ENCODE measurements at regions of chr17 and their contacts with region 1.

Region 1: DNA sequence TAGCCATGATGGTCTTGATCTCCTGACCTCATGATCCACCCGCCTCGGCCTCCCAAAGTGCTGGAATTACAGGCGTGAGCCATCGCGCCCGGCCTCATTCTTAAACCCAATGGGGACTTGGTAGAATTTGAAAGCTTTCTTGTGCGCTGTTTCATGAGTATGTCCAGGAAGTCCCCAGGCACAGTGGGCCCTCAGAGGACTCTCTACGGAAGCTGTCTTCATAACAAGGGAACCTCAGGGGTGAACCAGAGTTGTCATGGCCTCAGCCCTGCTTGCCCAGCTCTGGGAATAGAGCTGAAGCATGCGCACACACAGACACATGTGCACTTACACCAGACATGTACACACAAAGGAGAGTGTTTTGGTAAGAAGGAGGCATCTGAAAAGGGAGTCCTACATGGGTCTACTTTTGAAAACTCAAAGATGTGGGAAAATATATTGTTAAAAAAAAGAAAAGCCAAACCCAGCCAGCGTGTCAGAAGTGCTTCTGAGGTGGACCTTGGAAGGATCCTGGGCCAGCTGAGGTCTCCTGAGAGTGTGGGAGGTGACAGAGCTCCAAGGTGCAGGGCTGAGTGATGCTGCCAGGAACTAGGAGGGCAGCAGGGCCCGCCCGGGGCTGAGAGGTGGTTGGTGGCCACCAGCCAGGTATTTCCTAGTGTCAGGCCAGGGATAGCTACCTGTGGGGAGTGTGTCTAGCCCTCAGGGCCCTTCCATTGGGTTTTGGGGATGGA is 54.6 kb downstream of the EPN2 start:
- DNase-seq: no peak
- H3K4me3 ChIP-seq: no peak overlapping the region
- H3K27ac ChIP-seq: no peak overlapping the region
- H3K4me1 ChIP-seq: no peaks in the 10 kb centered on the region
- H3K27me3 ChIP-seq: no peaks in the 10 kb centered on the region
- CTCF ChIP-seq: no peak

Region 2: GRCh38 chr17:19254651-19255050 is 37.2 kb before region 1 on chr17:
- CTCF ChIA-PET with region 1: interaction called, 13 read pairs
- POLR2A ChIA-PET with region 1: no interaction called
- intact Hi-C with region 1: no loop called
- DNase-seq: no peak
- H3K4me3 ChIP-seq: no peak overlapping the region
- H3K27ac ChIP-seq: no peak overlapping the region
- H3K4me1 ChIP-seq: peaks cover 6% of the 10 kb centered on the region
- H3K27me3 ChIP-seq: no peaks in the 10 kb centered on the region
- CTCF ChIP-seq: no peak

Measured in A673 (cell line).